Heart right ventricle (tissue), 16 donors: ENCODE measurements at regions of chr7 and their contacts with region 1.

Region 1: DNA sequence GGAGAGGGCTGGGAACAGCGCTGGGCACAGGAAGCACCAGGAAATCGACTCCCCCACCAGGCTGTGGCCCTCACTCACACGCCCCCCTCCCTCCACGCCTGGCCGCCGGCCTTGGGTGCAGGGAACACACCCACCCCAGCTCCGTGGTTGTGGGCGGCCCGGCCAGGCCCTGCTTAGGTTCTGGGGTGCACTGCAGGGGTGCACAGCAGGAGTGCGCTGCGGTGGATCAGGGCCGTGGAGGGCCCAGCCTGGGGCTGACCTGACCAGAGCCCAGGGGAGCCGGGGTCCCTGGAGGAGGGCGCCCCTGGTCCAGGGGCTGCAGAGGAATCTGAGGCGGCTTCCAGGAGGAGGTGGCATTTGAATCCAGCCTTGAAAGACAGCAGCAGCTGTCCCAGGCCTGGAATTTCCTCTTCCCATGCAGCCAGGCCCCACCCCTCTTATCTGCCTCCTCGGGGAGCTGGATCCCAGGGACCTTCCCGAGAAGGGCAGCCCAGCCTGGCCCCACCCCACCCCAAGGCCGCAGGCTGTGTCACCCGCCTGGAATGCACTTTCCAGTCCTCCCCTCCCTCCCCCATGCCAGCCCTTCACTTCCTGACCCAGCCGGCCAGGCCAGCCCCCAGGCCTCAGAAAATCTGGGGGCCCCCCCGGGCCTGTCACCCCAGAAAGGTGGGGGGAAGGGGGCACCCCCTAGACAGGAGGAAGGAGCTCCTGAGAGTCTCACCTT is 18.4 kb upstream of the PDGFA start:
- DNase-seq: peak; percentile 63 to 67
- ATAC-seq: peak; percentile 64 to 91 (median 80)
- H3K4me3 ChIP-seq: no peak overlapping the region
- H3K27ac ChIP-seq: peak overlapping the region in 5 of 10 donors; percentile 28 to 57 (median 44)
- H3K4me1 ChIP-seq: peaks cover 3 to 24% (median 18%) of the 10 kb centered on the region in 9 donors
- H3K27me3 ChIP-seq: no peaks in the 10 kb centered on the region
- CTCF ChIP-seq: no peak

Region 2: DNA sequence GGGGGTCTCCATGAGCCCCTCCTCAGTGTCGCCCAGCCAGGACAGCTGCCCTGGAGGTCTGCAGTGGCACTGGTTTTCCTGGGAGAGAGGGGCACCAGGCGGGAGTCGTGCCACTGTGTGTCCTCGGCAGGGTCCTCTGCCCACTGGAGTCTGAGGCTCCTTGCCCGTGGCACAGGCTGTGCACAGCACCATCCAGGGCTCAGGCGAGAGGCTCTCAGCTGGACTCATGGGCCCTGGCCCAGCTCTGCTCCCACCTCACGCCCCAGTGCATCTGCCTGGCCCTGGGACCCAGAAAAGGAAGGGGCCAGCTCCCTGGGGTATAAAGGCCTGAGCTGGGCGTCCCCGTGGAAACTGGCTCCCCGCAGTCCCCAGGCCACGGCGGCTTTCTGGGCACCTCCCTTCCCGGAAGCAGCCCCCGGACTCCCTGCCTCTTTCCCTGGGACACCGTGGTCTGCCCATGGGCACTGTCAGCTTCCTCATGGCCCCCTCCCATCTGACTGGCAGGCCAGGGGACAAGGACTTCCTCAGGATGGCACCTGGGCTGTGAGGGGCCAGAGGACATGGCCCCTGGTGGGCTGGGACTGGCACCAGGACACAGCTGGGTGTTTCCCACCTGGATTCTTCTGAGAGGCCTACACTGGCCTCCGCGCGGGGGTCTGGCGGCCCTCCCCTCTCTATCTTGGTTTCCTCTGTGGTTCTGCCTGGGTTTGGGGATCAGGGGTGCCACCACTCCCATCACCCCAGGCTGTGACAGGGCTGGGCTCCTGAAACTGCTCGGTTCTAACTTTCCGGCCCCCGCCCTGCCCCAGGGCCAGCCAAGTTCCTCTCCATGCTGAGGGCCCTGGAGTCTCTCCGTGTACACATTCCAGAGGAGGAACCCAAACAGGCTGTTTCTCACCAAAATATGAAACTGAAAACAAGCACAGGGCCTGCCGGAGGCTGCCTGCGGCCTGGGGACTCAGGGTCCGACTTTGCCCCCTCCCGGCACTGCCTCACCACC is 242.6 kb before region 1 on chr7:
- intact Hi-C with region 1: no loop called
- DNase-seq: no peak
- ATAC-seq: peak in 2 of 8 donors; percentile 25 to 42
- H3K4me3 ChIP-seq: no peak overlapping the region
- H3K27ac ChIP-seq: no peak overlapping the region
- H3K4me1 ChIP-seq: peaks cover 0 to 3% (median 0%) of the 10 kb centered on the region in 9 donors
- H3K27me3 ChIP-seq: peaks cover 5 to 72% (median 54%) of the 10 kb centered on the region in 7 donors
- CTCF ChIP-seq: no peak

Region 3: DNA sequence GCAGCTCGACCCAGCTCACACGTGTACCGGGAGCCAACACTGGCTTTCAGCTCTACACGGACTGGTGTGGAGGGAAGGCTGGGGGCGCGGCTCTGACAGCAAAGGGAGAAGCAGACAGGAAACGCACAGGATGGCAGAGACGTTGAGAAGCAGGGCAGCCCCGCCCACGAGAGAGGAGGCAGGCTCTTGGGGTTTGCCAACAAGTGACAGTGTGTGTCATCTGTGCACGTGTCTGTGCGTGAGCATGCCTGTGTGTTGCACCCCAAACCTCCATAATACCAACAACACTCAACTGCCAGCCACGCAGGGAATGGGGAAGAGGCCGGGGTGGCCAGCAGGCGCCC is 46.0 kb after region 1 on chr7:
- intact Hi-C with region 1: loop called in 1 of 10 experiments (anchors 10 kb)
- DNase-seq: no peak
- ATAC-seq: peak in 1 of 8 donors; percentile 10
- H3K4me3 ChIP-seq: peak overlapping the region in 1 of 10 donors; percentile 35
- H3K27ac ChIP-seq: peak overlapping the region in 1 of 10 donors; percentile 64
- H3K4me1 ChIP-seq: peaks cover 0 to 12% (median 0%) of the 10 kb centered on the region in 9 donors
- H3K27me3 ChIP-seq: no peaks in the 10 kb centered on the region
- CTCF ChIP-seq: no peak